ENCODE measurements at regions of chr7 and their contacts with region 1.

Region 1: GRCh38 chr7:106056513-106057203 is 55.5 kb downstream of the SYPL1 start:
- DNase-seq: peak; percentile 49 to 66
- H3K4me3 ChIP-seq: no peak overlapping the region
- H3K27ac ChIP-seq: no peak overlapping the region
- H3K4me1 ChIP-seq: peaks cover 42% of the 10 kb centered on the region
- H3K27me3 ChIP-seq: no peaks in the 10 kb centered on the region
- CTCF ChIP-seq: peak; percentile 85

Region 2: GRCh38 chr7:104627516-104627915 is 1429.1 kb before region 1 on chr7:
- CTCF ChIA-PET with region 1: no interaction called
- POLR2A ChIA-PET with region 1: no interaction called
- intact Hi-C with region 1: no loop called
- DNase-seq: peak in 1 of 2 experiments; percentile 3
- H3K4me3 ChIP-seq: no peak overlapping the region
- H3K27ac ChIP-seq: no peak overlapping the region
- H3K4me1 ChIP-seq: no peaks in the 10 kb centered on the region
- H3K27me3 ChIP-seq: no peaks in the 10 kb centered on the region
- CTCF ChIP-seq: no peak

Region 3: GRCh38 chr7:106009403-106010226 is 47.0 kb before region 1 on chr7:
- CTCF ChIA-PET with region 1: no interaction called
- POLR2A ChIA-PET with region 1: no interaction called
- intact Hi-C with region 1: loop called (anchors 1 kb)
- DNase-seq: peak; percentile 77 to 94
- H3K4me3 ChIP-seq: peak overlapping the region; percentile 4; the same call in 1 of the 2 replicates
- H3K27ac ChIP-seq: no peak overlapping the region
- H3K4me1 ChIP-seq: peaks cover 6% of the 10 kb centered on the region
- H3K27me3 ChIP-seq: no peaks in the 10 kb centered on the region
- CTCF ChIP-seq: peak; percentile 94

Region 4: GRCh38 chr7:106094800-106095199 is 38.1 kb after region 1 on chr7:
- CTCF ChIA-PET with region 1: no interaction called
- POLR2A ChIA-PET with region 1: no interaction called
- intact Hi-C with region 1: loop called (anchors 1 kb)
- DNase-seq: no peak
- H3K4me3 ChIP-seq: no peak overlapping the region
- H3K27ac ChIP-seq: no peak overlapping the region
- H3K4me1 ChIP-seq: no peaks in the 10 kb centered on the region
- H3K27me3 ChIP-seq: no peaks in the 10 kb centered on the region
- CTCF ChIP-seq: peak; percentile 22; the same call in 1 of the 2 replicates

Region 5: GRCh38 chr7:106139265-106140251 is 82.9 kb after region 1 on chr7:
- CTCF ChIA-PET with region 1: interaction called, 13 read pairs
- POLR2A ChIA-PET with region 1: no interaction called
- intact Hi-C with region 1: no loop called
- DNase-seq: no peak
- H3K4me3 ChIP-seq: no peak overlapping the region
- H3K27ac ChIP-seq: no peak overlapping the region
- H3K4me1 ChIP-seq: no peaks in the 10 kb centered on the region
- H3K27me3 ChIP-seq: no peaks in the 10 kb centered on the region
- CTCF ChIP-seq: no peak

Region 6: DNA sequence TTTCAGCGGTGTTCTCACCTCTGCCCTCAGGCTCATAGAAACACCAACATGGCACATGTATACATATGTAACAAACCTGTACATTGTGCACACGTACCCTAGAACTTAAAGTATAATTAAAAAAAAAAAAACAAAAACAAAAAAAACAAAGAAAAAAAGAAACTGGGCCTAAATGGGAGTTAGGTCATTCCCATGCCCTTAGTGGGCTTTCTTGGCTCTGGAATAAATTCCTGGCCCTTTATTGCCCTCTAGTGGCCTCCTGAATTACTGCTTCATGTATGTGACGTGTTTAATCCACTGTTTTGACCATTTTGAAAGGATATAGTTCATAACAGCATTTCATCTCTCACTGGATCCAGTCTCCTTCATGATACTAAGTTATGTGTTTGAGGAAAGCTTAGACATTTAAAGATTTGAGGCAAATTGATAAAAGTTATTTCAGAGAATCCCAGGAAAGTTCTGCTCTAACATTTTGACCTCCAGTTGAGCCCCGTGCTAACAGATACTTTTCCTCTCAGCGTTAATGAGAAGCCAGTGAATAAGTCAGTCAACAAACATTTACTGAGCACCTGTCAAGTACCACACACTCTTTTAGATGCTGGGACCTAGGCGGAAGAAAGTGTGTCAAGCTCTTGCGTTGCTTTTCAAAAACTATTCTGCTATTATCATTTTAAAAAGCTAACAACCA is 110.1 kb after region 1 on chr7:
- CTCF ChIA-PET with region 1: interaction called, 8 read pairs
- POLR2A ChIA-PET with region 1: no interaction called
- intact Hi-C with region 1: loop called (anchors 1 kb)
- DNase-seq: peak; percentile 51 to 53
- H3K4me3 ChIP-seq: no peak overlapping the region
- H3K27ac ChIP-seq: no peak overlapping the region
- H3K4me1 ChIP-seq: no peaks in the 10 kb centered on the region
- H3K27me3 ChIP-seq: no peaks in the 10 kb centered on the region
- CTCF ChIP-seq: peak; percentile 92